ENCODE measurements at regions of chr15 and their contacts with region 1.

Region 1: GRCh38 chr15:40941528-40942336 is 11.5 kb upstream of the CHAC1 start:
- DNase-seq: peak; percentile 91
- CTCF ChIP-seq: peak; percentile 93

Region 2: DNA sequence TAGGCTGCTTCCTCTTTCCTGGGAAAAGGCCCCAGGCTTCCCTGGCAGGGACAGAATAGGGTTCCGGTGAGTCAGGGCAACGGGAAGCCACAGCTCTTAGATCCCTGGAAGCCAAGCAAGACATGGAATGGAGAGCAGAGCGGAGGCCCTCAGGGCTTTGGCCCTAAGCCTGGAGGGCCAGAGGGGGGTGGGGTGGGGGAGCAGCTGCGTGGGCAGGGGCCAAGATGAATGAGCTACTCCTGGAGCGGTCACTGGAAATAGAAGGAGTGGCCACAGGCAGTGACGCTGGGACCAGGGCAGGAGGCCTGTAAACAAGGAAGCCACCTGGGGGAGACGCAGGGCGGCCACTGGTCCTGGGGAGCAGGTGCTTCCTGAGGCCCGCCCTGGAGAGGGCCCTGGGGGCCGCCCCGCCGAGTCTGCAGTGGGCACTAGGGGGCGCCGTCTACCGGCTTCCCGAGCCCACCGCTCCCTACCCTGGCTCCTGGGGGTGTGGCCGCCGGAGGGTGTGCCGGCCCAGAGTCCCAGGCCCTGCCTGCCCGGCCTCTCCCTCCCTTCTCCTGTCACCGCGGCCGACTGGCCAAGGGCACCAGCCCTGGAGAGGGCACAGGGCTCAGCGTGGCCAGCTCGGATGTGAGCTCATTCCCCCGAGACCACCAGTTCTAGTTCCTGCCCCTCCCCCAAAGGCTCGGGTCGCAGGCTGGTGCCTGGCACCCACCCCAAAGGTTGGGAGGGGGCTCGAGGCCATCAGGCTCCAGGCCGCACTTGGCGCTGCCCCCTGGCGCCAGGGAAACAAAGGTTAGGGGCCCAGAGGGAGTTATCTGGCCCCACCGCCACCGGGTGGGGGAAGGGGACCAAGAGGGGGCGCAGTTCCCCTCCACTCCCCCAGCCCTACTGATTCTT is 35.4 kb before region 1 on chr15:
- CTCF ChIA-PET with region 1: interaction called, 131 read pairs
- POLR2A ChIA-PET with region 1: no interaction called
- DNase-seq: peak; percentile 87
- CTCF ChIP-seq: peak; percentile 80

Region 3: DNA sequence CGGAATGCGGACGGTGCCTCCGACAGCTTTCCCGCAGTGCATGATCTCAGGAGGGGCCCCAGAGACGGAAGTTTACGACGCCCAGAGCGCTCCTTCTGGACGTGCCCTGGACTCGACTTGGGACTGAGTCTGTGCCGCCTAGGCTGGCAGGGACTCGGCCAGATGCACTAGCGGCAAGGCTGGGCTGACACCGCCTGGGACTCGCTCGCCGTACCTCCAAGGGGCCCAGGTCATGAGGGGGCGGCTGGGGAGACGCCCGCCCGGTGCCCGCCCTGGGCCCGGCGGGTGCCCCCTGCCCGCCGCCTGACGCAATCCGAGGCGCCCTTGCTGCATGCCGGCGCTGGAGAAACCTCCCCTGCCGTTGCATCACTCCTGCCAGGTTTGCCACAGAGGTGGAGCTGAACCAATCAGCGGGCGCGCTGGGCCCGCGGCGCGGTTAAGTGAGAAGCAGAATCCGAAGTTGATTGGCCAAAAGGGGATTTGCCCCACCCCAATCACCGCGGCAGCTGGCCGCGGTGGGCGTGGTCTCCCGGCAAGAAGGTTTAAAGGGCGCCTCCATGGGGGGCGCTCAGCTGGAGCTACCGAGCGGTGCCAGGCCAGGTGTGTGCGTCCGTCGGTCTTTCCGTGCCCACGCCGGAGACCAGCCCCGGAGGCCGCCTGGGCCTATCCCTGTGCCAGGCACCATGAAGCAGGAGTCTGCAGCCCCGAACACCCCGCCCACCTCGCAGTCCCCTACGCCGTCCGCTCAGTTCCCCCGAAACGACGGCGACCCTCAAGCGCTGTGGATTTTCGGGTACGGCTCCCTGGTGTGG is 11.4 kb after region 1 on chr15 and contains the start of gene CHAC1:
- CTCF ChIA-PET with region 1: interaction called, 75 read pairs
- POLR2A ChIA-PET with region 1: interaction called, 4 read pairs
- DNase-seq: peak; percentile 99
- CTCF ChIP-seq: peak; percentile 16

Region 4: DNA sequence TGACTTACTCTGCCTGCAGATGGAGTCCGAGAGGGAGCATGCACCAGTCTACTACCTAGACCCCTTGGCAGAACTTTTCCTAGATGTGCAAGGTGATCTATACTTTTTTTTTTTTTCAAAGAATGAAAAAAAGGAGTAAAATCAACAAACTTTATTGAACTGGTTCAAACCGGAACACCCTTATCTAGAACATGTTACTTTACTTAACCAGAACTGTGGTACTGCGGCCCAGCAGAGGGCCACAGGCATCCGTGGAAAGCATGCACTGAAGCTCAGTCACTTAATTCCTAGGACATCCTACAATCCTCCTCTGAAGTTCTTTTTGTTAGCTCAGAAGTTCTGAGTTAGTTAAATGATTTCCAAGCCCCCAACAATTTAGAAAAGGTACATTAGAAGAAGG is 33.1 kb after region 1 on chr15:
- CTCF ChIA-PET with region 1: interaction called, 12 read pairs
- POLR2A ChIA-PET with region 1: no interaction called
- DNase-seq: no peak
- CTCF ChIP-seq: no peak

Region 5: GRCh38 chr15:40992241-40992741 is 50.6 kb after region 1 on chr15:
- CTCF ChIA-PET with region 1: interaction called, 17 read pairs
- POLR2A ChIA-PET with region 1: no interaction called
- DNase-seq: no peak
- CTCF ChIP-seq: no peak

Region 6: DNA sequence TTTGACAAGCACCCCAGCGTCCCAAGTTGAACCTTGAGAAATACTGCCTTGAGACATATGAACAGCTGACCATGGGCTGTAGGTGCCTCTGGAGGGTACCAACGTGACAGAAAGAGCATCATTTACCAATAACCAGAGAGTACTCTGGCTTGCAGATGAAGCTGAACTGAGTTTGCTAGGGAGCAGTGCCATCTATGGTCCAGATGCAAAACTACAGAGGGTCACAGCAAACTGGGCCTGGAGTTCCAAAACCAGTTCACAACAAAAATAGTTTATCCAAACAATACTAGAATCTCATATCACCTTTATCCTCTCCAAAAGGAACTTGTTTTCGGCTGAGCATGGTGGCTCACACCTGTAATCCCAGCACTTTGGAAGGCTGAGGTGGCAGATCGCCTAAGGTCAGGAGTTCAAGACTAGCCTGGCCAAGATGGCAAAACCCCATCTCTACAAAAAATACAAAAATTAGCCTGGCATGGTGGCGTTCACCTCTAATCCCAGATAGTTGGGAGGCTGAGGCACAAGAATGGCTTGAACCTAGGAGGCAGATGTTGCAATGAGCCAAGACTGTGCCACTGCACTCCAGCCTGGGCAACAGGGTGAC is 80.9 kb after region 1 on chr15:
- CTCF ChIA-PET with region 1: interaction called, 53 read pairs
- POLR2A ChIA-PET with region 1: no interaction called
- DNase-seq: peak; percentile 37
- CTCF ChIP-seq: peak; percentile 65

Measured in GM10248 (cell line).